PC-9 (cell line): ENCODE measurements at regions of chr5 and their contacts with region 1.

Region 1: DNA sequence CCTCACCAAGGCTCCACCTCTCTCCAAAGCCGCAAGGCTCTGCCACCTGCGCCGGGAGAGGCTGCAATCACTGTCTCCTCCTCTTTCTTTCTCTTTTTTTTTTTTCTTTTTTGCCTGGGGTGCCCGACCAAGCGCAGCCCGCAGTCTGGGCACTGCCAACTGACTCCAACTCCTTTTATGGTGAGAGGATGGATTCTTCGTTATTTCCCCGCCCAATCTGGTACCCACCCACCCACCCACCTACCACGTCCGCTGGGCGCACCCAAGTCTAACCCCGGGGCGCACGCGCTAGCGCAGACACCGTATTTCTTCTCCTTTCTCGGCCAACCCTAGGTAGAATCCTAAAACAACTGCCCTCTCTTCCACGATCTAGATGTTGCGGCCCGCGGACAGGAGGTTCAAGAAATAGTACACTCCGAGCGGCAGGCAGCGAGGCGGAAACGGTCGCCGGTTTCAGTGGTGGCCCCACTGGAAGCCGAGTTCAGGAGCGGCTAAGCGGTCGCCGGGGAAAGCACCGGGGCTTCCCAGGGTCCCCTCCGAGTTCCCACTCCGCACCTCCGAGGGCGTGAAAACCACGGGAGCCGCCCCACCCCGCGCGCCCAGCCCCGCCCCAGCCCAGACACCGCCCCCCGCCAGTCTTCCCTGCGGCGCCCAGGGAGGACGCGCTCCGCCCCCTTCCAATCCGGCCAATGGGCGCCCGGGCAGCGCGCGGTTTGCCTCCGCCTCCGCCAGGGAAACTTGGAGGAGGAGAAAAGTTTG is 381 bp upstream of the PTGER4 start:
- DNase-seq: peak; percentile 97 to 100
- H3K4me3 ChIP-seq: peak overlapping the region; percentile 82
- H3K27ac ChIP-seq: peak overlapping the region; percentile 93
- H3K4me1 ChIP-seq: peaks cover 54% of the 10 kb centered on the region
- H3K27me3 ChIP-seq: no peaks in the 10 kb centered on the region
- CTCF ChIP-seq: no peak

Region 2: GRCh38 chr5:39714036-39714698 is 965.2 kb before region 1 on chr5:
- CTCF ChIA-PET with region 1: interaction called, 21 read pairs
- POLR2A ChIA-PET with region 1: interaction called, 5 read pairs
- intact Hi-C with region 1: no loop called
- DNase-seq: peak; percentile 63 to 74
- H3K4me3 ChIP-seq: no peak overlapping the region
- H3K27ac ChIP-seq: peak overlapping the region; percentile 60
- H3K4me1 ChIP-seq: peaks cover 8% of the 10 kb centered on the region; the same call in 1 of the 2 replicates
- H3K27me3 ChIP-seq: no peaks in the 10 kb centered on the region
- CTCF ChIP-seq: peak; percentile 87

Region 3: DNA sequence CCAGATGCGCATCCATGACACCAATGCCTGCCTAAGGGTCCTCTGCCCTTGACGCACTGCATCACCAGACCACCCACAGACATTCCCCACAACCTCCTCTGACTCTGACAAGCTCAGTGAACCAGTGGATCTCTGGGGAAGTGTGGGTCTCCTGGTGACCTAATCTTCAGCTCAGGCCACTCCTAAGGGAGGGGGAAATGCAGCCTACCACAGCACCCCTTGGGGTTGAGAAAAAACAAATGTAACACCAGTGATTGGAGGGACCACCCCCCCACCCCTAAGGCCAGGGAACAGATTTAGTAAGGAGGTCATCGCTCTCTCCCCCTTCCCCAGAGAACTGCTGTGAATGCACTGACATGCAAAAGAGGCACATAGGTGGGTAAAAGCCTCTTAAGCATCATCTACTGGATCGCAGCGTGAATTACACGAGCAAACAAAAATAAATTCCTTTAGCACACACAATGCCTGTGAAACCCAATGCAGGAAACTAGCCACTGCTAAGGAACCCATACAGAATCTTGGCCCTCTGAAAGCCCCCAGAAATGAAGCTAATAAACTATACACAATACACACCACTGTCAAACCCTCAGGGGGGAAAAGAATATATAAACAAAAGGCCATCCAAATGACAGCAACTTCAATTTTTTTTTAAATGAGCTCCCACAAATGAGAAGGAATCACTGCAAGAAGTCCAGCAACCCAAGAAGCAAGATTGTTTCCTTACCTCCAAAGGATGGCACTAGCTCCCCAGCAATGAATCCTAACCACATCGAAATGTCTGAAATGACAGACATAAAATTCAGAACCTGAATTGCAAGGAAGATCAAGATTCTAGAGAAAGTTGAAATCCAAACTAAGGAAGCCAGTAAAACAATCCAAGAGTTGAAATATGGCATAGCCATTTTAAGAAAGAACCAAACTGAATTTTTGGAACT is 513.3 kb before region 1 on chr5:
- CTCF ChIA-PET with region 1: no interaction called
- POLR2A ChIA-PET with region 1: no interaction called
- intact Hi-C with region 1: loop called (anchors 2 kb)
- DNase-seq: no peak
- H3K4me3 ChIP-seq: no peak overlapping the region
- H3K27ac ChIP-seq: no peak overlapping the region
- H3K4me1 ChIP-seq: no peaks in the 10 kb centered on the region
- H3K27me3 ChIP-seq: no peaks in the 10 kb centered on the region
- CTCF ChIP-seq: 0 out of 2 replicates have a peak, but pooled peaks have one; percentile 30

Region 4: DNA sequence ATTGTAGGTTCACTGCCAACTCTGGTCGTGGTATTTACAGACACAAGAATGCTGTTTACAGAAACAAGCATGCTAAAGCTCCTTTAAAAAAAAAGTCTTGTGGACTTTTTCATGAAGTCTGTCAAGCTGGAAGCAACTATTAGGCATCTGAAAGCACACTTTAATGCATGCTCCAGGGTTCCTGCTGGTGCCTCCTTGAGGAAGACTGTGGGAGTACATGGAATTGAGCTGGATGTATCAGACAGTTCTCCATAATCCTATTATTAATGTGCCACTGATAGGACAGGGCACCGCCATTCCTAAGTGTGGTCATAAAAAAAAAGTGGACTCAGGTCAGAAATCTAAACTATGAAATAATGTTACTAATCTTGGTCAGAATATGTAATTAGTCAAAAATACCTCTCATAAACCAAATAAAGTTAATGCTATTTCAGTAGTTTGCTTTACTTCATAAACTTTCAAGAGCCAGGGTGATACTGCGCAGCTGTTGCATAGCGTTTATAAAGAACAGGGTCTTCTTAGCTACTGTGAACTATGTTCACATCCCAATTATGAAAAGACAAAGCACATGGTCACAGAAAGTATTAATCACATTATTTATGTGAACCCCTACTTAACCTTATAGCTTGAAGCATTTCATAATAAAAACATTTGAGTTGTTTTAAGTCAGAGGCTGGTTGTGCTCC is 390.4 kb before region 1 on chr5:
- CTCF ChIA-PET with region 1: no interaction called
- POLR2A ChIA-PET with region 1: no interaction called
- intact Hi-C with region 1: no loop called
- DNase-seq: no peak
- H3K4me3 ChIP-seq: no peak overlapping the region
- H3K27ac ChIP-seq: no peak overlapping the region
- H3K4me1 ChIP-seq: no peaks in the 10 kb centered on the region
- H3K27me3 ChIP-seq: no peaks in the 10 kb centered on the region
- CTCF ChIP-seq: 0 out of 2 replicates have a peak, but pooled peaks have one; percentile 26

Region 5: GRCh38 chr5:40518511-40518967 is 160.8 kb before region 1 on chr5:
- CTCF ChIA-PET with region 1: interaction called, 3 read pairs
- POLR2A ChIA-PET with region 1: no interaction called
- intact Hi-C with region 1: loop called (anchors 1 kb)
- DNase-seq: peak; percentile 96 to 98
- H3K4me3 ChIP-seq: no peak overlapping the region
- H3K27ac ChIP-seq: peak overlapping the region; percentile 84
- H3K4me1 ChIP-seq: peaks cover 33% of the 10 kb centered on the region
- H3K27me3 ChIP-seq: no peaks in the 10 kb centered on the region
- CTCF ChIP-seq: no peak

Region 6: DNA sequence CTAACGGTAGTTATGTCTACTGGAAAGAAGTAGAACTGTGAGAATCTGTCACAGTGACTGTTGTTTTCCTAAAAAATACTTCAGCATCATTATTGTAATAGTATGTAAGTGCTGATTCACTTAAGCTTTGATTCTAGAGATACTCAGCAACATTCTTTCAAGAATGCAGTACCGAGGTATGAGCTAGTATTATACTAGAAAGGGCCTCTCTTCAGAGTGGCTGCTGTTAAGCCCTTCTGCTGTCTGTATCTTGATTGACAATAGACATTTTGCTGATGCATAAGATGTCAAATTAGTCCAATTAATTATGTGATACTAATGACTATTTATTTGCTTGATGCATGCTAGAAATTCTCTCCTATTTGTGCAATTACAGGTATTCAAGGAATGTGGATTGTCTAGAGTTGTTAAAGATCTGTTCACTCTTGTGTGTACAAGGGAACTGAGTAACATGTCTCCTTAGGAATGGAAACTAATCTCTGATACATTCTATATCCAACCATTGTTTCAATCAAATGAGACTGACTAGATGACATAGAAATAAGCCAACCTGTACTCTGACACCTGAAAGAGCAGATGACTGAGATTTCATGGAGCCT is 92.0 kb before region 1 on chr5:
- CTCF ChIA-PET with region 1: interaction called, 3 read pairs
- POLR2A ChIA-PET with region 1: interaction called, 3 read pairs
- intact Hi-C with region 1: loop called (anchors 1 kb)
- DNase-seq: peak; percentile 28 to 93
- H3K4me3 ChIP-seq: no peak overlapping the region
- H3K27ac ChIP-seq: peak overlapping the region; percentile 49
- H3K4me1 ChIP-seq: peaks cover 19% of the 10 kb centered on the region
- H3K27me3 ChIP-seq: no peaks in the 10 kb centered on the region
- CTCF ChIP-seq: no peak

Region 7: DNA sequence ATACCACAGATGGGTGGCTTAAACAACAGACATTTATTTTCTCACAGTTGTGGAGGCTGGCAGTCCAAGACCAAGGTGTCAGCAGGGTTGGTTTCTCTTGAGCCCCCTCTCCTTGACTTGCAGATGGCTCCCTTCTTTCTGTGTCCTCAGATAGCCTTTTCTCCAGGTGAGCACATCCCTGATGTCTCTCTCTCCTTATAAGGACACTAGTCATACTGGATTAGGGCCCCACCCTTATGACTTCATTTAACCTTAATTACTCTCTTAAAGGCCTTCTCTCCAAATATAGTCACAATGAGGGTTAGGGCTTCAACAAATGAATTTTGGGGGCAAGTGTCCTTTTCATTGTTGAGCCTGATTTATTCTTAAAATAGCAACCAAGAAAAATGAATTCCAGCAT is 15.1 kb after region 1 on chr5:
- CTCF ChIA-PET with region 1: interaction called, 3 read pairs
- POLR2A ChIA-PET with region 1: interaction called, 27 read pairs
- intact Hi-C with region 1: no loop called
- DNase-seq: no peak
- H3K4me3 ChIP-seq: no peak overlapping the region
- H3K27ac ChIP-seq: no peak overlapping the region
- H3K4me1 ChIP-seq: peaks cover 8% of the 10 kb centered on the region; the same call in 1 of the 2 replicates
- H3K27me3 ChIP-seq: no peaks in the 10 kb centered on the region
- CTCF ChIP-seq: no peak

Region 8: GRCh38 chr5:40775846-40776657 is 96.7 kb after region 1 on chr5:
- CTCF ChIA-PET with region 1: no interaction called
- POLR2A ChIA-PET with region 1: no interaction called
- intact Hi-C with region 1: no loop called
- DNase-seq: no peak
- H3K4me3 ChIP-seq: no peak overlapping the region
- H3K27ac ChIP-seq: peak overlapping the region; percentile 27
- H3K4me1 ChIP-seq: peaks cover 18% of the 10 kb centered on the region; the same call in 1 of the 2 replicates
- H3K27me3 ChIP-seq: no peaks in the 10 kb centered on the region
- CTCF ChIP-seq: no peak

Region 9: GRCh38 chr5:40939753-40940152 is 260.4 kb after region 1 on chr5:
- CTCF ChIA-PET with region 1: no interaction called
- POLR2A ChIA-PET with region 1: no interaction called
- intact Hi-C with region 1: no loop called
- DNase-seq: no peak
- H3K4me3 ChIP-seq: no peak overlapping the region
- H3K27ac ChIP-seq: no peak overlapping the region
- H3K4me1 ChIP-seq: no peaks in the 10 kb centered on the region
- H3K27me3 ChIP-seq: no peaks in the 10 kb centered on the region
- CTCF ChIP-seq: no peak

Region 10: DNA sequence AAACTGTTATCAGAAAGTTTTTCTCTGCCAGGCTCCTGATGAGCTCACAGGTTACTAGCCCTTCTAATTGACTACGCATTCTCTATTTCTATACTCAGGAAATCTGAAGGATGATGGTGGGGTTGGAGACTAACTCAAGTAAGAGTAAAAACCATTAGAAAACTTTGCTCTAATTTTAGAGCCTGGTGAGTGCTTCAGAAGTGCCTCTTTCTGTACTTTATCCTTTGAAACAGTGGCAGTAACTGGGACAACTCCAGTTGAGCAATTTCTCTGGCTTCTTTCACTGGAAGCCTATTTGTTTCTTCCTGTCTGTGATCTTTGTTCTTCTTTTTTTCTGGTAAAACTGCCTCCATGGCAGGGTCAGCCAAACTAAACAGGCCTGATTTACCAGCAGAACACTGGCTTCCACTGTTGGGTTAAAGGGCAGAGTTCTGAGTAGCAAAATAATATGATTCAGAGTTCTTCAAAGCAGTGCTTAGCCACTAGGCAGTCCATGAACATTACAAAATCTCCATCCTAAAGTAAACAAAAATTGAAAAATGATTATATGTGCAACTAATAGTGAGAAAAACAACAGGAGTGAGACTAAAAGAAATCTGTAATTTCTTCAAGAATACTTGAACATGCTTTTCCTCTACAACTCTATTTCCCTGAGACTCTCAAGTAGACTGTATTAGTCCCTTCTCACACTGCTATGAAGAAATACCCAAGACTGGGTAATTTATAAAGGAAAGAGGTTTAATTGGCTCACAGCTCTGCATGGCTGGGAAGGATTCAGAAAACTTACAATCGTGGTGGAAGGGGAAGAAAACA is 312.0 kb after region 1 on chr5:
- CTCF ChIA-PET with region 1: no interaction called
- POLR2A ChIA-PET with region 1: no interaction called
- intact Hi-C with region 1: no loop called
- DNase-seq: peak; percentile 50 to 91
- H3K4me3 ChIP-seq: peak overlapping the region; percentile 7; the same call in 1 of the 2 replicates
- H3K27ac ChIP-seq: peak overlapping the region; percentile 60
- H3K4me1 ChIP-seq: peaks cover 38% of the 10 kb centered on the region
- H3K27me3 ChIP-seq: no peaks in the 10 kb centered on the region
- CTCF ChIP-seq: no peak